Naive thymus-derived CD4-positive, alpha-beta T cell (primary cell): ENCODE measurements at regions of chr12 and their contacts with region 1.

Region 1: GRCh38 chr12:27807063-27807703 is 27.1 kb upstream of the MANSC4 start:
- DNase-seq: peak in 3 of 9 donors; percentile 10 to 14 (median 13)
- ATAC-seq: peak; percentile 36
- H3K4me3 ChIP-seq: no peak overlapping the region
- H3K4me3 Mint-ChIP-seq: peak overlapping the region; percentile 1 to 87 (median 74)
- H3K27ac ChIP-seq: peak overlapping the region; percentile 46
- H3K27ac Mint-ChIP-seq: peak overlapping the region; percentile 20 to 95 (median 86)
- H3K4me1 ChIP-seq: no peaks in the 10 kb centered on the region
- H3K4me1 Mint-ChIP-seq: peaks cover 7 to 47% (median 24%) of the 10 kb centered on the region in 7 donors
- H3K27me3 ChIP-seq: no peaks in the 10 kb centered on the region
- H3K27me3 Mint-ChIP-seq: peaks cover 0 to 18% (median 0%) of the 10 kb centered on the region in 5 donors

Region 2: GRCh38 chr12:27158297-27158696 is 648.9 kb before region 1 on chr12:
- CTCF ChIA-PET with region 1: no interaction called
- POLR2A ChIA-PET with region 1: no interaction called
- intact Hi-C with region 1: no loop called
- DNase-seq: no peak
- ATAC-seq: no peak
- H3K4me3 ChIP-seq: no peak overlapping the region
- H3K4me3 Mint-ChIP-seq: no peak overlapping the region
- H3K27ac ChIP-seq: no peak overlapping the region
- H3K27ac Mint-ChIP-seq: no peak overlapping the region
- H3K4me1 ChIP-seq: no peaks in the 10 kb centered on the region
- H3K4me1 Mint-ChIP-seq: no peaks in the 10 kb centered on the region
- H3K27me3 ChIP-seq: no peaks in the 10 kb centered on the region
- H3K27me3 Mint-ChIP-seq: peaks cover 0 to 11% (median 0%) of the 10 kb centered on the region in 5 donors

Region 3: DNA sequence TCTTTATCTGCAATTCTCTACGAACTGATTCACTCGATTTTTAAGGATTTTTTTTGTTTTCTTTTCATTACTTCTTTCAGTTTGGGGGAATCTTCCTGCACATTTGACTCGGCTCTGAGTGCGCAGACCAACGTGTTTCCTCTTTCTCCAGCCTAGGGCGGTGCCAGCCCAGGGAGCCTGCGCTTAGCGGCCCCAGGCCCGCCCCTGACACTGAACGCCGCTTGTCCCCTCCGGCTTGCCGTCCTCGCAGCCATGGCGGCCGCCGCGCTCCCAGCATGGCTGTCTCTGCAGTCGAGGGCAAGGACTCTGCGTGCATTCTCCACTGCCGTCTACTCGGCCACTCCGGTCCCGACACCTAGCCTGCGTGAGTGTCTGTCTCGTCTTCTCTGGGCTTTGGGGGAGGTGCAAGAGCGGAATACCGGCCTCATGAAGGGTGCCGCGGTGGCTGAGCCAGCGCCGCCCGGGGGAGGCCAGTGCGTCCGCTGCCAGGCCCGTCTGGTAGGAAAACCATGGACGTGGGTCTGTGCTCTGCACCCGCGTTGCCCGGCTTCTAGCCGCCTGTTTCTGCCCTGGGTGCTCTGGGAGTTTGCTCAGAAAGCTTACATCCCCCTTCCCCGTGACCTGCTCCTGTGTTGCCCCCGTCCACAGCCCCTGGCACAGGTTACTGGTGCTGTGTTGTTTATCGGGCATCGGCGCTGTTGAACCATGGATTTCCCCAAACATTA is 96.4 kb before region 1 on chr12 and contains the start of gene MRPS35:
- CTCF ChIA-PET with region 1: no interaction called
- POLR2A ChIA-PET with region 1: no interaction called
- intact Hi-C with region 1: loop called in 1 of 2 experiments (anchors 2 kb)
- DNase-seq: peak; percentile 86 to 94 (median 92)
- ATAC-seq: peak; percentile 100
- H3K4me3 ChIP-seq: peak within 1 kb of the TSS; percentile 98
- H3K4me3 Mint-ChIP-seq: peak within 1 kb of the TSS; percentile 94 to 100 (median 98)
- H3K27ac ChIP-seq: peak within 1 kb of the TSS; percentile 85
- H3K27ac Mint-ChIP-seq: peak within 1 kb of the TSS; percentile 91 to 100 (median 98)
- H3K4me1 ChIP-seq: peaks cover 7 to 13% of the 10 kb centered on the region in 2 donors
- H3K4me1 Mint-ChIP-seq: peaks cover 21 to 46% (median 39%) of the 10 kb centered on the region in 7 donors
- H3K27me3 ChIP-seq: no peaks in the 10 kb centered on the region
- H3K27me3 Mint-ChIP-seq: peaks cover 0 to 18% (median 0%) of the 10 kb centered on the region in 5 donors
- total RNA-seq, gene MRPS35: 19.9 to 35.7 (median 23.5) TPM